ENCODE measurements at regions of chr21 and their contacts with region 1.

Region 1: GRCh38 chr21:31107871-31108270 is 69.6 kb upstream of the KRTAP19-8 start:
- DNase-seq: no peak
- H3K4me3 ChIP-seq: no peak overlapping the region
- CTCF ChIP-seq: no peak

Region 2: GRCh38 chr21:30646904-30647414 is 460.9 kb before region 1 on chr21:
- CTCF ChIA-PET with region 1: no interaction called
- POLR2A ChIA-PET with region 1: no interaction called
- DNase-seq: no peak
- H3K4me3 ChIP-seq: no peak overlapping the region
- CTCF ChIP-seq: no peak

Region 3: GRCh38 chr21:31151156-31152045 is 43.5 kb after region 1 on chr21:
- CTCF ChIA-PET with region 1: interaction called, 12 read pairs
- POLR2A ChIA-PET with region 1: no interaction called
- DNase-seq: no peak
- H3K4me3 ChIP-seq: no peak overlapping the region
- CTCF ChIP-seq: no peak

Region 4: GRCh38 chr21:31185663-31186062 is 77.8 kb after region 1 on chr21:
- CTCF ChIA-PET with region 1: interaction called, 568 read pairs
- POLR2A ChIA-PET with region 1: no interaction called
- DNase-seq: no peak
- H3K4me3 ChIP-seq: no peak overlapping the region
- CTCF ChIP-seq: no peak

Measured in AG04449 (cell line).